Posterior cingulate gyrus (tissue), 11 donors: ENCODE measurements at regions of chr10 and their contacts with region 1.

Region 1: DNA sequence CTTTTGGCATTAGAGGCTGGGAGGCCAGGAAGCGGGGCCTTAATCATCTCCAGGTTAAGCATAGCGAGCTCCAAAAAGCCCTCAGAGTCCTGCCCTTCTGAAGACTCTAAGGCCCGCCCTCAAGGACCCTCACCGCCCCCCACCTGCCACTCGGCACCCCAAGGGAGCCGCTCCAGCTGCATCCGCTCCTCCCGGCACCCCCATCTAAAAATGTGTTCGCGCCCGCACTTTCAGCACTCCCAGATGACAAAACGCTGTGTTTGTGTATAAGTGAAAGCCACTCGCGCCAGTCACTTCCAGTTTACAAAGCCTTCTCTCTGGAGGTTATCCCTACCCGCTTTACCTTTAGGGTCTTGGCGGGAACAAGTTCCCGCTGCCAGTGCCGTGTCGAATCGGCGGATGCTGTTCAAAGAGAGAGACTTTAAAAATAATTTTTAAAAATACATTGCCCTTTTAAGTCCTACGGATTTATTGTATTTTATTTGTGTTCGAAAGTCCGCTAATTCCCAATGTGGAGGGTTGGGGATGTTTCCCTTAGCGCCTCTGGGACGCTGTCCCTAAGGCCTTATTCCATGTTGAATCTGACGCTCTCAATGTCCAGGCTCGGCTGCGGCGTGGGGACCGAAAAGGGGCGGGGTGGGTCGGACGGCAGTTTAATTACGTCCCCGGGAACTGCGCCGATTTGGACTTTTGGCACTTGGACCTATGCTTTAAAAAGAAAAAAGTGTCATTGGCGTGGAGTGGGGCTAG is at the starts of genes DCLRE1A and NHLRC2:
- DNase-seq: peak; percentile 68 to 95 (median 78)

Region 2: DNA sequence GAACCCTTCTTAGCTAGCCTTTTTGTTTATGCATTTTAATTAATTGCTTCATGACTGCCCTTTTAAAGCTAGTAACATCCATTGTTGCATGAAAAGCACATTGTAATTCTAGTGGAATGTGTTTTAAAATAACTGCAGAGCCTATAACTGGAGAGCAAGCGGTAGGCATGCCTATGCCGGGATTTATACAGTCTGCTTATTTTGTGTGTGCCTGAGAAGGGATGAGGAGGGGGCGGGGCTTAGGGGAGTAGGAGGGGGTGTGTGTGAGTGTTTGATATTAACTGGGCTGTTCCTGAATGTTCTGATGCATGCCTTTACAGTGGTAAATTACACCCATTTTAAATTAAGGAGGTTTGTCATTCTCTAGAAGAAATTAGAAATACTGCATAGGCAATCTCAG is 696.0 kb before region 1 on chr10:
- intact Hi-C with region 1: no loop called
- DNase-seq: no peak

Region 3: DNA sequence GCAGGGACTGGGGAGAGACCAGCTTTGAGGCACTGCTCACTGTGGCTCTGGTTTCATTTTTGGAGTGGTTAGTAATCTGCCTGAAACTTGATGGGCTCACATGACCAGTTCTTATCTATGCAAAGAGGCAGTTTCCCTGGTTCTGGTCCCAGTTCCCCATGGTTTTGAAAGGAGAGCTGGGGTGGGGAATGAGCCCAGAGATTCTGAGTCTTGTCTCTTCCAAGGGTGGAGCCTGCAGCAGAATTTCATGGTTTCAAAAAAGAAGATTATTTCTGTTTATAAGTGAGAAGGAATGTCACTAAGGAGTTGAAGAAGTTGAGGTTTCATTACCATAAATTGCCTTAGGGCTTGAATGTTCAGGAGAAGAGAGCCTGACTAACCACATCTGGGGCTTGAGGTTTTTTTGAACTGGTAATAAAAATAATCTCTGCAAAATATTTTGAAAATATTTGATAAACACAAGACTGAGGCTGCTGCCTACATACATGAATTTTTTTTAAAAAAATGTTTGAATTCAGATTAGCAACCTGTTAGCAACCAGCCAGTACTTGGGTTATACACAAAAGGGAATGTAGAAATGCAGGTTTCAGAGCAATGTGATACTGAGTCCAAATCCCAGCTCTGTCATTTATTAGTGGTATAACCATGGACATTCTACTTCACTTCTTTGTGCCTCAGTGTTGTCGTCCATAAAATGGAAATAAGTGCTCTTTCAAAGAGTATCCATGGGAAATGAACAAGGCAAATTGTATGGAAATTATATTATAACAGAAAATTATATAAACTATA is 491.3 kb before region 1 on chr10:
- intact Hi-C with region 1: no loop called
- DNase-seq: no peak

Region 4: GRCh38 chr10:114031073-114031972 is 177.1 kb after region 1 on chr10:
- intact Hi-C with region 1: no loop called
- DNase-seq: no peak

Region 5: GRCh38 chr10:114045136-114046086 is 191.2 kb after region 1 on chr10:
- intact Hi-C with region 1: loop called (anchors 5 kb)
- DNase-seq: peak in 2 of 10 donors; percentile 73 to 86

Region 6: DNA sequence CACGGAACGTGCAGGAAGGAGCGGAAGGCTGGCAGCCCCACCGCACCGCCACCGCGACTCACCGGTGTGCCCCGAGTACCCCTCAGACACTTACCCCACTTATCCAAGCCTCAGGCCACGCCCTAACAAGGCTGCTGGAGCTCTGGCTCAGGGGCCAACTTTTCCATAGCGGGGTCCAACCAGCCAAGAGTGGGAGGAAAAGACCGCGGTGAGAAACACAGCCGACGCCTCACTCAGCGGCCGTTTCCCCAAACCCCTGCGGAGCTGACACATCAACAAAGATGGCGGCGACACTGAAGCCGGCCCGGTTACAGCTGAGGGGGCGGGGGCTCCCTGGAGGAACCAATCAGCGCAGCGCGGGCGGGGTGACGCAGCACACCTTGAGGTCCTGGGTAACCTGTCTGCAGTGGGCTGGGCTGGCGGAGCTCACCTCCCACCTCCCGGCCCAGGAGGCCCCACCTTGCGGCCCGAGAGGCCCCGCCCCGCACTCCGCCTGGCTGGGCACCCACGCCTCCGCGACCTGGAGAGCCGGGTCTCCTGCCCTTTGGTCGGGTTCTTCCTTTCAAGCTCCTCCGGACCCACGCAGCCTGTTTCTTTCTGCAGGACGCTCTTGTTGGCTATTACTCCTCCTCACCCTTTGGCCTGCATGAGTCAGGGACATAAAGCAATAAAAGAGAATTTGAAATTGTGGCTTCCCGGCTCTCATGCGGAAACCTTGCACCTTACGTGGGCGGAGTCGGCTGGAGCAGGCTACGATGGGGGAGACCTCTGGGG is 319.9 kb after region 1 on chr10 and contains the start of gene CCDC186:
- intact Hi-C with region 1: loop called (anchors 5 kb)
- DNase-seq: peak; percentile 87 to 100 (median 95)

Region 7: GRCh38 chr10:114306126-114306973 is 452.2 kb after region 1 on chr10:
- intact Hi-C with region 1: no loop called
- DNase-seq: peak in 1 of 10 donors; percentile 40